ENCODE measurements at regions of chr3 and their contacts with region 1.

Region 1: DNA sequence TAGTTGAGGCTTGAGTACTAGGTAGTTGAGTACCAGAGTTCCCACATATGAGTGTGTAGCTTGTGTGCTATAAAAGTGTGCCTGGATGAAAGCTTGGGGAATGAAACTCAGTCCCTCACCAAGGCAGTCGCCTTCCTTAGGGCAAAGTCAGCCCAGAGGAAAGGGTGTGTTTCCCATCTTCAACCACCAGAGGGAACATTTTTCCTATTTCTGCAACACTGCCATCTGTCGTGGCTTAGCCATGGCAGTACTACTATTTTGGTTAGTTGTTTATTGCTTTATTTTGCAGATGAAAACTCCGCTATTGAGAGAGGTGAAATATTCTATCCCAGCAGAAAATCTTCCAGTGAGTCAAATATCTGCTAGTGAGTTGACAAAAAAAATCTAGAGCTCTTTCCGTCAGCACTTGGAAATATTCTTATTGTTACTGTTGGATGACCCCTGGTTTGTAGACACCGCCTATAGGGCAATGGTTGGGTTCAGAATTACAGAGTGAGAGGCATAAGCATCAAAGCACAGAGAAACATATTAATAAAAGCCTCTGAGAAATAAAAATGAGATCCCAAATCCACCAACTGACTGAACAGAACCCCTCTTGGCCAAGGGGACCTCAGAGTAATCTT is 239.9 kb downstream of the CPNE4 start:
- DNase-seq: no peak
- H3K4me3 ChIP-seq: no peak overlapping the region
- H3K27me3 ChIP-seq: no peaks in the 10 kb centered on the region
- CTCF ChIP-seq: peak; percentile 86

Region 2: GRCh38 chr3:131349946-131350347 is 444.9 kb before region 1 on chr3:
- CTCF ChIA-PET with region 1: no interaction called
- POLR2A ChIA-PET with region 1: no interaction called
- DNase-seq: peak; percentile 66
- H3K4me3 ChIP-seq: no peak overlapping the region
- H3K27me3 ChIP-seq: no peaks in the 10 kb centered on the region
- CTCF ChIP-seq: no peak

Region 3: GRCh38 chr3:131762981-131763564 is 31.8 kb before region 1 on chr3:
- CTCF ChIA-PET with region 1: interaction called, 10 read pairs
- POLR2A ChIA-PET with region 1: no interaction called
- DNase-seq: no peak
- H3K4me3 ChIP-seq: no peak overlapping the region
- H3K27me3 ChIP-seq: no peaks in the 10 kb centered on the region
- CTCF ChIP-seq: no peak

Region 4: DNA sequence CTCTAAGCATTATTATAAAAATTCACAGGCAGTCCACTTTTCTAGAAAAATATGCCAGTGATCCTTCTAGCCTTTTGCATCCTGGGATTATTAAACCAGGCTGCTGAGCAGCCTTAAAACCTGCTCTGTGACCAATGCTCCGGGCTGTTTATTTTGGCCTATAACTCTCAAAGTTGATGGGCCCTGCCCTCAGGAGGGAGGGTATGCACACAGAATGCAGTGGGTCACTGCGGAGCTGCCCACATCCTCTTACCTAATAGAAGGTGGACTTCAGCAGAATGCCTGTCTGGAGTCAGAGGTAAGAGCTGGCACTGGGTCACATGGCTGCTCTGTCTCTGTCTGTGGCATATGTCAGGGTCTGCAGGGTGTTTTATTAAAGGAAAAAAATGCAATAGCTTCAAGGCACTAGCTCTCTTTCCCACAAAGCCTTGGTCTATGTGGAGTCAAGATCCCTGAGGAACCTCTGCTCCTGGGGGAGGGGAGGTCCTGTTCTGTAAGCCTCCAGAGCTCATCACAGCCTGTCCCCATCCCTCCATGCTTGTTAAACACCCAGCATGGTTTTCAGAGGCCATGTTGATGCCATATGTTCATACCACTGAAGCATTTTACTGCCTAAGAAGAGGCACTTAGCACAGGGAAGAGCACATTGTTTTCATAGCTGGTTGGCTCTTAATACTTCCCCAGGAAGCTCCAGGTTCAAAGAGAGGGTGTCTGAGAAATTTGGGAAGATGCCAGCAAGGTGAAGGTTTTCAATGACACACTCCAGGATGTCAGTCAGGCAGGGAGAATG is 214.2 kb after region 1 on chr3:
- CTCF ChIA-PET with region 1: interaction called, 10 read pairs
- POLR2A ChIA-PET with region 1: no interaction called
- DNase-seq: no peak
- H3K4me3 ChIP-seq: no peak overlapping the region
- H3K27me3 ChIP-seq: no peaks in the 10 kb centered on the region
- CTCF ChIP-seq: no peak

Region 5: GRCh38 chr3:132029182-132029902 is 234.5 kb after region 1 on chr3:
- CTCF ChIA-PET with region 1: interaction called, 46 read pairs
- POLR2A ChIA-PET with region 1: no interaction called
- DNase-seq: no peak
- H3K4me3 ChIP-seq: no peak overlapping the region
- H3K27me3 ChIP-seq: peaks cover 13% of the 10 kb centered on the region
- CTCF ChIP-seq: peak; percentile 96

Region 6: GRCh38 chr3:132034486-132035464 is 239.9 kb after region 1 on chr3 and contains the start of gene CPNE4:
- CTCF ChIA-PET with region 1: interaction called, 46 read pairs
- POLR2A ChIA-PET with region 1: no interaction called
- DNase-seq: no peak
- H3K4me3 ChIP-seq: no peak within 1 kb of the TSS
- H3K27me3 ChIP-seq: peaks cover 16% of the 10 kb centered on the region
- CTCF ChIP-seq: peak; percentile 92
- polyA plus RNA-seq, gene CPNE4: not detected in 2 replicates

Region 7: GRCh38 chr3:132180337-132180791 is 385.5 kb after region 1 on chr3:
- CTCF ChIA-PET with region 1: interaction called, 10 read pairs
- POLR2A ChIA-PET with region 1: no interaction called
- DNase-seq: no peak
- H3K4me3 ChIP-seq: no peak overlapping the region
- H3K27me3 ChIP-seq: no peaks in the 10 kb centered on the region
- CTCF ChIP-seq: peak; percentile 59